Heart left ventricle (tissue), 16 donors: ENCODE measurements at regions of chr1 and their contacts with region 1.

Region 1: GRCh38 chr1:9145021-9145668 is 16.2 kb upstream of the GPR157 start:
- DNase-seq: peak in 1 of 5 donors; percentile 26
- ATAC-seq: no peak
- H3K4me3 ChIP-seq: no peak overlapping the region
- H3K27ac ChIP-seq: no peak overlapping the region
- H3K4me1 ChIP-seq: peaks cover 0 to 30% (median 12%) of the 10 kb centered on the region in 12 donors
- H3K27me3 ChIP-seq: no peaks in the 10 kb centered on the region
- CTCF ChIP-seq: no peak
- POLR2A ChIP-seq: no peak

Region 2: GRCh38 chr1:9181176-9181906 is 36.2 kb after region 1 on chr1:
- intact Hi-C with region 1: loop called in 2 of 10 experiments (anchors 5 kb)
- DNase-seq: peak; percentile 67 to 89 (median 76)
- ATAC-seq: peak; percentile 54 to 80 (median 70)
- H3K4me3 ChIP-seq: peak overlapping the region; percentile 55 to 86 (median 76)
- H3K27ac ChIP-seq: peak overlapping the region in 10 of 12 donors; percentile 15 to 85 (median 70)
- H3K4me1 ChIP-seq: peaks cover 0 to 57% (median 13%) of the 10 kb centered on the region in 12 donors
- H3K27me3 ChIP-seq: peaks cover 0 to 20% (median 0%) of the 10 kb centered on the region in 9 donors
- CTCF ChIP-seq: peak; percentile 91 to 98 (median 96)
- POLR2A ChIP-seq: no peak